ENCODE measurements at regions of chr17 and their contacts with region 1.

Region 1: GRCh38 chr17:10226930-10227685 is 28.7 kb upstream of the GAS7 start:
- DNase-seq: peak; percentile 8
- H3K4me3 Mint-ChIP-seq: no peak overlapping the region
- H3K27ac Mint-ChIP-seq: no peak overlapping the region
- H3K4me1 Mint-ChIP-seq: no peaks in the 10 kb centered on the region
- H3K27me3 Mint-ChIP-seq: no peaks in the 10 kb centered on the region

Region 2: GRCh38 chr17:9924735-9925191 is 302.3 kb before region 1 on chr17:
- intact Hi-C with region 1: loop called (anchors 2 kb)
- DNase-seq: no peak
- H3K4me3 Mint-ChIP-seq: no peak overlapping the region
- H3K27ac Mint-ChIP-seq: no peak overlapping the region
- H3K4me1 Mint-ChIP-seq: no peaks in the 10 kb centered on the region
- H3K27me3 Mint-ChIP-seq: no peaks in the 10 kb centered on the region

Region 3: DNA sequence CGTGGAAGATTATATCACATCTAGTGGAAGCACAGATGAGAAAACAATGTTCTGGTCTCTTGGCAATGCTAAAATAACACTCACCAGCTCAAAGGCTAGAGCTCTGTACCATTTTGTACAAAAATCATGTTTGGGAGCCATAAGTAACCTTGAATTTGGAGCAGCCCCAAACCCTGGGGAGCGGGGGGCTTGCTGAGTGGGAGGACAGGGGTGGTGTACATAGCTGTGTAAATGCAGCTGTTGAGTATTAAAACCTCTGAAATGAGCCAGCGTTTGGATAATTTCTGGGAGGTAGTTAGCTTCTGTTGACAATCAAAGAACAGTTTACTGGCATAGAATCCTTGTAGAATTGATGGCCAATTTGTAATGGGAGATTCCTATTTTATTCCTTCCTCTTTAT is 190.3 kb after region 1 on chr17:
- intact Hi-C with region 1: no loop called
- DNase-seq: no peak
- H3K4me3 Mint-ChIP-seq: no peak overlapping the region
- H3K27ac Mint-ChIP-seq: no peak overlapping the region
- H3K4me1 Mint-ChIP-seq: no peaks in the 10 kb centered on the region
- H3K27me3 Mint-ChIP-seq: no peaks in the 10 kb centered on the region

Measured in activated T-helper 2 cell treated with anti-CD3 and anti-CD28 coated beads, Interferon-gamma antibody, Interleukin-2, Interleukin-4, amounts not matched to agents 10 μg/mL and 5 μg/mL and 100 μg/mL, durations not matched to agents 14 hours and 24 hours and 36 hours (primary cell).